ENCODE measurements at regions of chr14 and their contacts with region 1.

Region 1: DNA sequence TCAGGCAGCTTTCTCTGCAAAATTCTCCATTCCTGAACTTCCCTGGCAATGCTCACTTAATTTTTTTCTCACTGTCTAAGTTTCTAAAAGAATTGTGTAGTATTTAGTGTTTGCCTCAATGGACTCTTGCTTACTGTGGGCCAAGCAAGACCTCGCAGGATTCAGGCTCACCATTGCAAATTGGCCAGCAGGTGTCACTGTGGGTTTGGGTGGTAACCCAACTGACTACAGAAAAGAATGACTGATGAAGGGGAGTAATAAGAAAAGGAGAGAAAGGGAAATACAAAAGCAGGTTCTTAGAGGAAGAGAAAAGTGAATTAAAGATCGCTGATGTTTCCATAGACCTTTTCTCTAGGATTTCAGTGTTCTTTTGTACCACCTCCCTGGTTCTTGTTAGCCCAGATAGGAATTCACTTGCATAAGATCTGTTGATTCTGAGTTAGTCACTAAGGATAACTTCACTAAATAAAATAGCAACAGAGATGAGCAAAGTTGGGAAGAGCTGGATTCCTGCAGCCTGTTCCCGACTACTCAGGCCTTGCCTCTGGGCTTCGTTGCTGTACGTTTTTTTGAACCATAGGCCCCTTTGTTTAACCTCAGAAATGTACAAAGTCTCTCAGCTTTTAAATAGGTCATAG is 386.5 kb upstream of the DDHD1 start:
- DNase-seq: peak; percentile 67
- H3K4me3 Mint-ChIP-seq: no peak overlapping the region
- H3K27ac Mint-ChIP-seq: no peak overlapping the region
- H3K4me1 Mint-ChIP-seq: no peaks in the 10 kb centered on the region
- H3K27me3 Mint-ChIP-seq: no peaks in the 10 kb centered on the region

Region 2: GRCh38 chr14:54347997-54348611 is 808.5 kb after region 1 on chr14:
- CTCF ChIA-PET with region 1: interaction called, 18 read pairs
- POLR2A ChIA-PET with region 1: no interaction called
- intact Hi-C with region 1: no loop called
- DNase-seq: no peak
- H3K4me3 Mint-ChIP-seq: no peak overlapping the region
- H3K27ac Mint-ChIP-seq: no peak overlapping the region
- H3K4me1 Mint-ChIP-seq: no peaks in the 10 kb centered on the region
- H3K27me3 Mint-ChIP-seq: peaks cover 6% of the 10 kb centered on the region